ENCODE measurements at regions of chr6 and their contacts with region 1.

Region 1: GRCh38 chr6:155100087-155100486 is 105.0 kb downstream of the TIAM2 start:
- DNase-seq: no peak
- ATAC-seq: peak; percentile 48; the same call in 1 of the 2 replicates
- H3K4me3 ChIP-seq: no peak overlapping the region
- H3K27ac ChIP-seq: no peak overlapping the region
- H3K4me1 ChIP-seq: no peaks in the 10 kb centered on the region; the same call in 1 of the 2 replicates
- H3K27me3 ChIP-seq: no peaks in the 10 kb centered on the region
- CTCF ChIP-seq: no peak

Region 2: GRCh38 chr6:155078331-155078745 is 21.7 kb before region 1 on chr6:
- CTCF ChIA-PET with region 1: interaction called, 10 read pairs
- POLR2A ChIA-PET with region 1: no interaction called
- in situ Hi-C with region 1: no loop called
- intact Hi-C with region 1: no loop called
- DNase-seq: no peak
- ATAC-seq: peak; percentile 28
- H3K4me3 ChIP-seq: no peak overlapping the region
- H3K27ac ChIP-seq: no peak overlapping the region
- H3K4me1 ChIP-seq: peaks cover 6% of the 10 kb centered on the region; the same call in 1 of the 2 replicates
- H3K27me3 ChIP-seq: no peaks in the 10 kb centered on the region
- CTCF ChIP-seq: no peak